ENCODE measurements at regions of chr21 and their contacts with region 1.

Region 1: DNA sequence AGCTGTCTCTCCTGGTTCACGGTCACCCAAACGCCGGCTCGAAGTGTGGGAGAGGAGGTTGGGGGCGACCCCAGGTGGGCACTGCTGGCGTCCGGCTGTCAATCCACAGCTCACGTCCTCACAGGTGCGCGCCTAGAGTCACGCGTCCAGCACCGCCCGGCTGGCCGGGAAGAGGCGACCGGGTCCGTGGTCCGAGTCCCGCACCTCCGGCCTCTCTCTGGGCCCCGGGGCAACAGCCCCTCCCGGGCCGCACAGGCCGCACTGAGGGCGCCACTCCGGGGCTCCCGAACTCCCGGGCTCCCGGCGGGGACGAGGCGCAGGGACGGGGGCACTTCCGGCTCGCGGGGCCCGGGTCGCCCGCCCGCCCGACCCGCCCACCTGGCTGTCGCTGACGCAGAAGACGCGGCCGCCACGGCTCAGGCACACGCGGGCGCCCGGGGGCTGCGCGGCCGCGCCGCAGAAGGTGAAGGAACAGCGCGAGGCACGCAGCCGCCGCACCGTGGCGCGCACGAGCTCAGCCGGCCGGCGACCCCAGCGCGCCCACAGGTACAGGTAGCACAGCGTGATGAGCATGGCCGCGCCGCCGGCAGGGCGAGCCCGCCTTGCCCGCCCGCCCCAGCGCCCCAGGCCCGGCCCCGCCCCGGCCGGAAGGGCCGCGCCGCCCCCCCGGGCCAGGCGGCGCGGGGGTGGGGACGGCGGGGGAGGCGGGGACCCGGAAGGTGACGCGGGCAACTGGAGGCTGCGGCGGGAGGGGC is at the start of gene HLCS:
- DNase-seq: peak in 1 of 2 experiments; percentile 75
- H3K4me3 ChIP-seq: peak within 1 kb of the TSS; percentile 46 to 78 (median 62)
- H3K27ac ChIP-seq: no peak within 1 kb of the TSS; the same call in 1 of the 2 replicates
- H3K4me1 ChIP-seq: peaks cover 0 to 6% (median 1%) of the 10 kb centered on the region in 4 experiments; a peak in 3 of 7 replicates
- H3K27me3 ChIP-seq: no peaks in the 10 kb centered on the region
- CTCF ChIP-seq: peak; percentile 44 to 74 (median 49)
- EP300 ChIP-seq: no peak
- POLR2A ChIP-seq: peak in 1 of 2 experiments; percentile 44; a peak in 2 of 3 replicates
- RAD21 ChIP-seq: peak in 1 of 2 experiments; percentile 36; a peak in 1 of 4 replicates
- total RNA-seq, gene HLCS: 12.2 and 14.2 TPM in 2 replicates

Region 2: GRCh38 chr21:36948686-36949085 is 17.6 kb before region 1 on chr21:
- CTCF ChIA-PET with region 1: interaction called, 6 read pairs
- POLR2A ChIA-PET with region 1: interaction called, 10 read pairs
- DNase-seq: no peak
- H3K4me3 ChIP-seq: no peak overlapping the region
- H3K27ac ChIP-seq: no peak overlapping the region
- H3K4me1 ChIP-seq: peaks cover 3 to 8% (median 7%) of the 10 kb centered on the region in 4 experiments; a peak in 6 of 7 replicates
- H3K27me3 ChIP-seq: peaks cover 0 to 8% (median 3%) of the 10 kb centered on the region in 4 experiments; a peak in 4 of 7 replicates
- CTCF ChIP-seq: no peak
- EP300 ChIP-seq: no peak
- POLR2A ChIP-seq: no peak
- RAD21 ChIP-seq: no peak